Activated CD4-positive, alpha-beta memory T cell treated with anti-CD3 and anti-CD28 coated beads, Interleukin-2, amount 10 ng/mL, durations not matched to agents 7 days and 5 days (primary cell): ENCODE measurements at regions of chr19 and their contacts with region 1.

Region 1: DNA sequence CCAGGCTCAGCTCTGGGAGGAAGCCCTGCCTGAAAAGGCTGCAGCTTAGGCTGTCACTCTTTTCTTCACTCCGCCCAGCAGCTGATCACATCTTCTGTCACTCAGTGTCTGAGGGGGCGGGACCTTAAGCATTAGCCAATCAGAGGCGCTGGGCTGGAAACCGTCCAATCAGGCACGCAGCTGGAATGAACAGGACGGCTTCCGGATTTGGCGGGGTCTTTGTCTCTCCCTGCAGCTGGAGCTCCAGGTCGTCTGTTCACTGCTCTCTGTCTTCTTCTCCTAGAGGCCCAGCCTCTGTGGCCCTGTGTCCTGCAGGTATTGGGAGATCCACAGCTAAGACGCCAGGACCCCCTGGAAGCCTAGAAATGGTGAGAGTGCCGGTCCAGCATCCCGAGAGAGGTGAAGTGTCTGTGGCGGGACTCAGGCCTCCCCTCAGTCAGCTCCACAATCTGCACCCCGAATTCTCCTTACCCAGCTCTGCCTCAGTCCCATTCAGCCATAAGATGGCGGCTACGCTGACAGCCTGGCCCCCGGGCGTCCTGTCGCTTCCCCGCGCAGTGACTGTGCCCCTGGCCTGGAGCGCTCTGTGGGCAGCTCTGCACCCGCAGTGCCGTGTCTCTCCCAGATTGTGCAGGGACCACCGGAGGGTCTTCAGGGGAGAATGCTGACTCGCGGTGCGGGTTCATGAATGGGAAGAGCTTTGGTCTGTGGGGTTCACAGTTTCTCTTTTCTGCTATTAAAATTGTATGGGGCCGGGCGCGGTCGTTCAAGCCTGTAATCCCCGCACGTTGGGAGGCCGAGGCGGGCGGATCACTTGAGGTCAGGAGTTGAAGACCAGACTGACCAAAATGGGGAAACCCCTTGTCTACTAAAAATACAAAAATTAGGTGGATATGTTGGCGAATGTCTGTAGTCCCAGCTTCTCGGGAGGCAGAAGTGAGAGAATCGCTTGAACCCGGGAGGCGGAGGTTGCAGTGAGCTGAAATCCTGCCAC is at the start of gene ZNF66:
- DNase-seq: peak; percentile 95
- H3K4me3 Mint-ChIP-seq: peak within 1 kb of the TSS; percentile 99
- H3K27ac Mint-ChIP-seq: peak within 1 kb of the TSS; percentile 94
- H3K4me1 Mint-ChIP-seq: peaks cover 7% of the 10 kb centered on the region
- H3K27me3 Mint-ChIP-seq: no peaks in the 10 kb centered on the region
- total RNA-seq, gene ZNF66: 6.0 to 7.5 TPM

Region 2: DNA sequence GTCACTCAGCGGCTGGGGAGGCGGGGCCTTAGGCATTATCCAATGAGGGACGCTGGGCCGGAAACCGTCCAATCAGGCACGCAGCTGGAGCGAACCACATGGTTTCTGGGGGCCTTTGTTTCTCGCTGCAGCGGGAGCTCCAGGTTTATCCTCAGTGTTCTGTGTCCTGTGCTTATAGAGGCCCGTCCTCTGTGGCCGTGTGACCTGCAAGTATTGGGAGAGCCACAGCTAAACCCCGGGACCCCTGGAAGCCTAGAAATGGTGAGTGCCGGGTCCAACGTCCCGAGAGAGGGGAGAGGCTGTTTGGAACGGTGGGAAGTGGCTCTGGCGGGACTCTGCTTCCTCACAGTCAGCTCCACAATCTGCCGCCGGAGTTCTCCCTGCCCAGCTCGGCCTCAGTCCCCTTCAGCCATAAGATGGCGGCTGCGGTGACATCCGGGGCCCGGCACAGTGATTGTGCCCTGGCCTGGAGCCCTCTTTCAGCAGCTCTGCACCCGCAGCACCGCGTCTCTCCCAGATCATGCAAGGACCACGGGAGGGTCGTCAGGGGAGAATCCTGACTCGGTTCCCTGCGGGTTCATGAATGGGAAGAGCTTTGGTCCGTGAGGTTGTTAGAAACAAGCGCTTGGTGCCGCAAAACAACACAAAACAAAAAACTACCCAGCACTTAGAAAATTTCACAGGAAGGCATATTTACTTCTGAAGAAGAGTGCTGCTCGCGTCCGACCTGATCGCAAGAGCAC is 910.5 kb before region 1 on chr19 and contains the start of gene ZNF253:
- CTCF ChIA-PET with region 1: no interaction called
- POLR2A ChIA-PET with region 1: interaction called, 15 read pairs
- DNase-seq: peak; percentile 97
- H3K4me3 Mint-ChIP-seq: peak within 1 kb of the TSS; percentile 100
- H3K27ac Mint-ChIP-seq: peak within 1 kb of the TSS; percentile 100
- H3K4me1 Mint-ChIP-seq: peaks cover 22% of the 10 kb centered on the region
- H3K27me3 Mint-ChIP-seq: no peaks in the 10 kb centered on the region
- total RNA-seq, gene ZNF253: 12.9 to 14.7 TPM

Region 3: DNA sequence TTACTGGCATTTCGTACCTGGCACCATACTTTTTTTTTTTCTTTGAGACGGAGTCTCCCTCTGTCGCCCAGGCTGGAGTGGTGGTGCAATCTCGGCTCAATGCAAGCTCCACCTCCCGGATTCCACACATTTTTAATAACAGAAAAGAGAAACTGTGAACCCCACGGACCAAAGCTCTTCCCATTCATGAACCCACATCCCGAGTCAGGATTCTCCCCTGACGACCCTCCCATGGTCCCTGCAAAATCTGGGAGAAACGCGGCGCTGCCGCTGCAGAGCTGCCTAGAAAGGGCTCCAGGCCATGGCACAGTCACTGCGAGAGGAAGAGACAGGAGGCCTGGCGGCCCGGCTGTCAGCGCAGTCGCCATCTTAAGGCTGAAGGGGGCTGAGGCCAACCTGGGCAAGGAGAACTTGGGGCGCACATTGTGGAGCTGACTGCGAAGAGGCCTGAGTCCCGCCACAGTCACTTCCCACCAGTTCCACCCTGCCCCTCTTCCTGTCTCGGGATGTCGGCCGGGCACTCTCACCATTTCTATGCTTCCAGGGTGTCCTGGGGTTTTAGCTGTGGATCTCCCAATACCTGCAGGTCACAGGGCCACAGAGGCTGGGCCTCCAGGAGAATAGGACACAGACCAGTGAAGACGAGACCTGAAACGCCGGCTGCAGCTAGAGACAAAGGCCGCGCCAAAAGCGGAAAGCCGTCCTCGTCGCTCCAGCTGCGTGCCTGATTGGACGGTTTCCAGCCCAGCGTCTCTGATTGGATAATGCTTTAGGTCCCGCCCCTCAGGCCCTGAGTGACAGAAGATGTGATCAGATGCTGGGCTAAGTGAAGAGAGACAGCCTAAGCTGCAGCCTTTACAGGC is 538.4 kb before region 1 on chr19:
- CTCF ChIA-PET with region 1: no interaction called
- POLR2A ChIA-PET with region 1: interaction called, 10 read pairs
- DNase-seq: peak; percentile 88
- H3K4me3 Mint-ChIP-seq: peak overlapping the region; percentile 87
- H3K27ac Mint-ChIP-seq: peak overlapping the region; percentile 82
- H3K4me1 Mint-ChIP-seq: peaks cover 10% of the 10 kb centered on the region
- H3K27me3 Mint-ChIP-seq: no peaks in the 10 kb centered on the region

Region 4: GRCh38 chr19:20565321-20566018 is 210.9 kb before region 1 on chr19 and contains the start of gene ZNF737:
- CTCF ChIA-PET with region 1: interaction called, 3 read pairs
- POLR2A ChIA-PET with region 1: interaction called, 32 read pairs
- DNase-seq: peak; percentile 91
- H3K4me3 Mint-ChIP-seq: peak within 1 kb of the TSS; percentile 98
- H3K27ac Mint-ChIP-seq: peak within 1 kb of the TSS; percentile 93
- H3K4me1 Mint-ChIP-seq: peaks cover 20% of the 10 kb centered on the region
- H3K27me3 Mint-ChIP-seq: no peaks in the 10 kb centered on the region
- total RNA-seq, gene ZNF737: 10.4 to 11.7 TPM

Region 5: DNA sequence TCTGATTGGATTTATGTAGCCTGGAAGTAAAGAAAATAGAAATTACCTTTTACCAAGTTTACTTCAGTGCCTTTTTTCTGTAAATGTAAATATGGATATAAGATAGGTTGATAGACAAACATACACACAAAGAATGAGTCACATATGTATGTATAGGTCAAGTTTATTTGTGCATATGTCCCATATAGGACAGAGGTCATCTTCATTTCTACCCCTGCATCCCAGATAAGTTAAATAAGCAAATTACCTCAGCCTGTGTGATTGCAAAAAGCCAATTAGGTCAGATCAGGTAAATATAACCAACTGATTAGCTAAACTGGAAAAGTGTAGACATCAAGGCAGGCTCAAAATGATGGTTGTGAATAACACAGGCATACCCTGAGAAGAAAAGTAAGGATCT is 49.6 kb before region 1 on chr19:
- CTCF ChIA-PET with region 1: no interaction called
- POLR2A ChIA-PET with region 1: no interaction called
- DNase-seq: no peak
- H3K4me3 Mint-ChIP-seq: no peak overlapping the region
- H3K27ac Mint-ChIP-seq: no peak overlapping the region
- H3K4me1 Mint-ChIP-seq: no peaks in the 10 kb centered on the region
- H3K27me3 Mint-ChIP-seq: no peaks in the 10 kb centered on the region

Region 6: DNA sequence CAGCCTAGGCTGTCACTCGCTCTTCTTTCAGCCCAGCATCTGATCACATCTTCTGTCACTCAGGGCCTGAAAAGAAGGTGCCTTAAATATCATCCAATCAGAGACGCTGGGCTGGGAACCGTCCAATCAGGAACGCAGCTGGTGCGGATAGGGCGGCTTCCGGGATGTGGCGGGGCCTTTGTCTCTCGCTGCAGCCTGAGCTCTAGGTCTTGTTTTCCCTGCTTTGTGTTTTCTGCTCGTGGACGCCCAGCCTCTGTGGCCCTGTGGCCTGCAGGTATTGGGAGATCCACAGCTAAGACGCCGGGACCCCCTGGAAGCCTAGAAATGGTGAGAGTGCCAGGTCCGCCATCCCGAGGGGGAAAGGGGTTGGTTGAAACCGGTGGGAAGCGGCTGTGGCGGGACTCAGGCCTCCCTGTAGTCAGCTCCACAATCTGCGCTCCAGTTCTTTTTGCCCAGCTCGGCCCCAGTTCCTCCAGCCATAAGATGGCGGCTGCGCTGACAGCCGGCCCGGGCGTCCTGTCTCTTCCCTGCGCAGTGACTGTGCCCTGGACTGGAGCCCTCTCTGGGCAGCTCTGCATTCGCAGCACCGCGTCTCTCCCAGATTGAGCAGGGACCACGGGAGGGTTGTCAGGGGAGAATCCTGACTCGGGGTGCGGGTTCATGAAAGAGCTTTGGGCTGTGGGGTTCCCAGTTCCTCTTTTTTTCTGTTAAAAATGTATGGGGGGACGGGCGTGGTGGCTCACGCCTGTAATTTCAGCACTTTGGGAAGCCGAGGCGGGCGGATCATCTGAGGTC is 146.9 kb after region 1 on chr19 and contains the start of gene ZNF85:
- CTCF ChIA-PET with region 1: interaction called, 6 read pairs
- POLR2A ChIA-PET with region 1: interaction called, 39 read pairs
- DNase-seq: peak; percentile 94
- H3K4me3 Mint-ChIP-seq: peak within 1 kb of the TSS; percentile 94
- H3K27ac Mint-ChIP-seq: peak within 1 kb of the TSS; percentile 94
- H3K4me1 Mint-ChIP-seq: peaks cover 19% of the 10 kb centered on the region
- H3K27me3 Mint-ChIP-seq: no peaks in the 10 kb centered on the region
- total RNA-seq, gene ZNF85: 16.4 to 17.2 TPM

Region 7: GRCh38 chr19:21020298-21021227 is 244.2 kb after region 1 on chr19 and contains the start of gene ZNF430:
- CTCF ChIA-PET with region 1: interaction called, 4 read pairs
- POLR2A ChIA-PET with region 1: interaction called, 17 read pairs
- DNase-seq: peak; percentile 96
- H3K4me3 Mint-ChIP-seq: peak within 1 kb of the TSS; percentile 99
- H3K27ac Mint-ChIP-seq: peak within 1 kb of the TSS; percentile 99
- H3K4me1 Mint-ChIP-seq: peaks cover 39% of the 10 kb centered on the region
- H3K27me3 Mint-ChIP-seq: no peaks in the 10 kb centered on the region
- total RNA-seq, gene ZNF430: 24.0 to 27.0 TPM

Region 8: DNA sequence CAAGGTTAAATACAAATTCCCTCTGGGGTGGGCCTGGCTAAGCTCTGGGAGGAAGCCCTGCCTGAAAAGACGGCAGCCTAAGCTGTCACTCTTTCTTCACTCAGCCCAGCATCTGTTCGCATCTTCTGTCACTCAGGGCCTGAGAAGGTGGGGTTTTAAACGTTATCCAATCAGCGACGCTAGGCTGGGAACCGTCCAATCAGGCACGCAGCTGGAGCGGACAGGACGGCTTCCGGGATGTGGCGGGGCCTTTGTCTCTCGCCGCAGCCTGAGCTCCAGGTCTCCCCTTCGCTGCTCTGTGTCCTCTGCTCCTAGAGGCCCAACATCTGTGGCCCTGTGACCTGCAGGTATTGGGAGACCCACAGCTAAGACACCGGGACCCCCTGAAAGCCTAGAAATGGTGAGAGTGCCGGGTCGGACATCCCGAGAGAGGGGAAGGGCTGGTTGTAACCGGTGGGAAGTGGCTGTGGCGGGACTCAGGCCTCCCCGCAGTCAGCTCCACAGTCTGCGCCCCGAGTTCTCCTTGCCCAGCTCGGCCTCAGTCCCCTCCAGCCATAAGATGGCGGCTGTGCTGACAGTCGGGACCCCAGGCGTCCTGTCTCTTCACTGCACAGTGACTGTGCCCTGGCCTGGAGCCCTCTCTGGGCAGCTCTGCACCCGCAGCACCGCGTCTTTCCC is 365.5 kb after region 1 on chr19 and contains the start of gene ZNF431:
- CTCF ChIA-PET with region 1: no interaction called
- POLR2A ChIA-PET with region 1: interaction called, 22 read pairs
- DNase-seq: peak; percentile 93
- H3K4me3 Mint-ChIP-seq: peak within 1 kb of the TSS; percentile 96
- H3K27ac Mint-ChIP-seq: peak within 1 kb of the TSS; percentile 91
- H3K4me1 Mint-ChIP-seq: peaks cover 22% of the 10 kb centered on the region
- H3K27me3 Mint-ChIP-seq: no peaks in the 10 kb centered on the region
- total RNA-seq, gene ZNF431: 16.1 to 20.5 TPM